ENCODE measurements at regions of chr4 and their contacts with region 1.

Region 1: GRCh38 chr4:57163530-57164459 is 53.6 kb upstream of the IGFBP7 start:
- DNase-seq: peak; percentile 86
- H3K4me3 Mint-ChIP-seq: peak overlapping the region; percentile 91
- H3K27ac Mint-ChIP-seq: peak overlapping the region; percentile 82
- H3K4me1 Mint-ChIP-seq: peaks cover 15% of the 10 kb centered on the region
- H3K27me3 Mint-ChIP-seq: no peaks in the 10 kb centered on the region
- CTCF ChIP-seq: peak; percentile 88

Region 2: GRCh38 chr4:56496241-56496640 is 667.6 kb before region 1 on chr4:
- CTCF ChIA-PET with region 1: no interaction called
- POLR2A ChIA-PET with region 1: no interaction called
- intact Hi-C with region 1: no loop called
- DNase-seq: no peak
- H3K4me3 Mint-ChIP-seq: no peak overlapping the region
- H3K27ac Mint-ChIP-seq: no peak overlapping the region
- H3K4me1 Mint-ChIP-seq: no peaks in the 10 kb centered on the region
- H3K27me3 Mint-ChIP-seq: no peaks in the 10 kb centered on the region
- CTCF ChIP-seq: no peak

Region 3: DNA sequence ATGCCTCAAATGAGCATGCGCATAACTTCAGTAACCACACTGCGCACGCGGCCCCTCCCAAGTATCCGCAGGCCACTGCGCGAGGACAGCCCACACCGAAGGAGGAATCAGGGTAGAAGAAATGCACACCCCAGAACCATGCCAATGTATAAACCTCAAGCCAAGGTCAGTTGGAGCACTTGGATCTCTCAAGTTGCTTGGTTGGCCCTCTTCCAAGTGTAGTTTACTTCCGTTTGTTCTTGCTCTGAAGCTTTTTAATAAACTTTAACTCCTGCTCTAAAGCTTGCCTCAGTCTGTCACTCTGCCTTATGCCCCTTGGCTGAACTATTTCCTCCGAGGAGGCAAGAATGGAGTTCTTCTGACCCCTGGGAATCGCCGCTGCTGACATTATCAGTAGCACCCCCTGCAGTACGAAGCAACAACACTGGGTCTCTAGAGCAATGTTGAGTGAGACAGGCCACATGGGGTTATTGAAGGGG is 320.3 kb before region 1 on chr4:
- CTCF ChIA-PET with region 1: no interaction called
- POLR2A ChIA-PET with region 1: no interaction called
- intact Hi-C with region 1: no loop called
- DNase-seq: no peak
- H3K4me3 Mint-ChIP-seq: no peak overlapping the region
- H3K27ac Mint-ChIP-seq: no peak overlapping the region
- H3K4me1 Mint-ChIP-seq: no peaks in the 10 kb centered on the region
- H3K27me3 Mint-ChIP-seq: no peaks in the 10 kb centered on the region
- CTCF ChIP-seq: no peak

Region 4: GRCh38 chr4:57037982-57038604 is 125.7 kb before region 1 on chr4:
- CTCF ChIA-PET with region 1: interaction called, 213 read pairs
- POLR2A ChIA-PET with region 1: interaction called, 8 read pairs
- intact Hi-C with region 1: loop called (anchors 1 kb)
- DNase-seq: peak; percentile 76
- H3K4me3 Mint-ChIP-seq: no peak overlapping the region
- H3K27ac Mint-ChIP-seq: no peak overlapping the region
- H3K4me1 Mint-ChIP-seq: peaks cover 24% of the 10 kb centered on the region
- H3K27me3 Mint-ChIP-seq: no peaks in the 10 kb centered on the region
- CTCF ChIP-seq: peak; percentile 89

Region 5: DNA sequence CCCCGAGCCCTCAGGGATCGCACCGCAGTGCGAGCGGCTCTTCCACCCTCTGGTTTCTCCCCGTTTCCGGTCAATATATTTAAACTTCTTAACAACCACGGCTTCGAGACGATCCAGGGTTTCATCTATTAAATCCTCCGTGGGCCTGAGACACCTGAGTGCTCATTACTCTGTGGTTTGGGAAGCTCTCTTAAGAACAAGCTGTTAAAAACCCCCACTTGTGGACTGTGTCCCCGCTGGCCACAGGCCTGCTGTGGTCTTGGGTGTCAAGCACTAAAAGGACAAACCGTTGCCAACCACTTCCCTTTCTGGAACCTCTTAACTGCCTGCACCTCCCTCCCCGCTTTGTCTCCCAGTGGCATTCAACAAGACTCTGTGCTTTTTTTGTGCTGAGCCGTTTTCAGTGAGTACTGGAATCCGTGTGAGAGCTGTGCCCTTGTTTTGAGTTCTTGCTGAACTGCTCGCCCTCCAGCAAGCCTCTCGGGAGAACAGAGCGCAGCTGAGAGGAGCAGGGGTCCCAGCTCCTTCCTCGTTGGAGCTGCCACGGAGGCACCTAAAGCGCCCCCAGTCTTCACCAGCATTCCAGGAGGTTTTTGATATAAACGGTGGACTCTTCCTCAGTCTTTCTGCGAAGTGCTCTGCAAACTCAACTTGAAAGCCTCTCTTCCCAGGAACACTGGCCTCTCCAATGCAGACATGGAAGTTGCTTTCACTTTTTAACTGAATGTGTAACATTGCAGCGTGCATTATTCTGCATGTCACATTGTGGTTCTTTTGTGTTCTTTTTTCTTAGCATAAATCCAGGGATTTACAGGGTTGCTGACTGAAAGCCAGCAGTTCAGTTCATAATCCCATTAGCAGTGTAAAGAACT is 52.9 kb before region 1 on chr4:
- CTCF ChIA-PET with region 1: interaction called, 10 read pairs
- POLR2A ChIA-PET with region 1: no interaction called
- intact Hi-C with region 1: no loop called
- DNase-seq: no peak
- H3K4me3 Mint-ChIP-seq: peak overlapping the region; percentile 68
- H3K27ac Mint-ChIP-seq: no peak overlapping the region
- H3K4me1 Mint-ChIP-seq: peaks cover 30% of the 10 kb centered on the region
- H3K27me3 Mint-ChIP-seq: no peaks in the 10 kb centered on the region
- CTCF ChIP-seq: no peak

Region 6: GRCh38 chr4:57190601-57191481 is 27.0 kb after region 1 on chr4:
- CTCF ChIA-PET with region 1: interaction called, 21 read pairs
- POLR2A ChIA-PET with region 1: no interaction called
- intact Hi-C with region 1: no loop called
- DNase-seq: peak; percentile 50
- H3K4me3 Mint-ChIP-seq: no peak overlapping the region
- H3K27ac Mint-ChIP-seq: no peak overlapping the region
- H3K4me1 Mint-ChIP-seq: peaks cover 9% of the 10 kb centered on the region
- H3K27me3 Mint-ChIP-seq: no peaks in the 10 kb centered on the region
- CTCF ChIP-seq: peak; percentile 55

Region 7: DNA sequence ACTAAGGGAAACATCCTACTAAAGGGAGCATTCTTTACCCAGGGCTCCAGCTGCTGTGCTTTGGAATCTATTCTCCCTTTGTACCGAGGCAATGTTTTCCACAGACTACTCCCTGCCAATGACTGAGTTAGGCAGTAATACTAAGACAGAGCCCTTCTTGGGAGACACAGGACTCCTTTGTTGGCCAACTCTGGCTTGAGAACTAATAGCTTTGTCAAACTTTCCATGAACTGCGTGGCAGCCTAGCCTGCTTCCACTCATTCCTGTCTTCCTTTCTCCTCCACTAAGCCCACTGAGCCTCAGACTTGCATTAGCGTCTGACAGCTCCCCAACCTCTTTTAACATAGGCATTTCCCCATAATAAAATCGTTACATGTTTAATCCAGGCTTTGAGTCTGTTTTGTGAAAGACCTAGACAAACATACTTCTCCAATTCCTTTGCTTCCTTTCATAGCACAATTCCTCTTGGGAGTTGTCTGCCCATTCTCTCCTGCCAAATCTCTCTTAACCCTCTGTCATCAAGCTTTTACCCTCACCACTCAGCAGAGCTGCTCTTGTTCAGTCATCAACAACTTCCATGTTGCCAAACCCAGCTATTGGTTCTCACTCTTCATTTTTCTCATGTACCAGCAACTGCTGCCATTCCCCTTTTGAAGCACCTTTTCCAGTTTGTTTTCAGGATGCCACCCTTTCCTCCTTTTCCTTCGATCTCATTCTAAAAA is 246.7 kb after region 1 on chr4:
- CTCF ChIA-PET with region 1: interaction called, 40 read pairs
- POLR2A ChIA-PET with region 1: interaction called, 4 read pairs
- intact Hi-C with region 1: no loop called
- DNase-seq: no peak
- H3K4me3 Mint-ChIP-seq: no peak overlapping the region
- H3K27ac Mint-ChIP-seq: no peak overlapping the region
- H3K4me1 Mint-ChIP-seq: peaks cover 2% of the 10 kb centered on the region
- H3K27me3 Mint-ChIP-seq: no peaks in the 10 kb centered on the region
- CTCF ChIP-seq: no peak

Region 8: GRCh38 chr4:57442831-57443291 is 279.1 kb after region 1 on chr4:
- CTCF ChIA-PET with region 1: interaction called, 69 read pairs
- POLR2A ChIA-PET with region 1: interaction called, 3 read pairs
- intact Hi-C with region 1: loop called (anchors 5 kb)
- DNase-seq: peak; percentile 70
- H3K4me3 Mint-ChIP-seq: no peak overlapping the region
- H3K27ac Mint-ChIP-seq: no peak overlapping the region
- H3K4me1 Mint-ChIP-seq: no peaks in the 10 kb centered on the region
- H3K27me3 Mint-ChIP-seq: no peaks in the 10 kb centered on the region
- CTCF ChIP-seq: peak; percentile 91

Region 9: GRCh38 chr4:58247792-58248191 is 1084.0 kb after region 1 on chr4:
- CTCF ChIA-PET with region 1: no interaction called
- POLR2A ChIA-PET with region 1: no interaction called
- intact Hi-C with region 1: loop called (anchors 10 kb)
- DNase-seq: peak; percentile 44
- H3K4me3 Mint-ChIP-seq: no peak overlapping the region
- H3K27ac Mint-ChIP-seq: no peak overlapping the region
- H3K4me1 Mint-ChIP-seq: no peaks in the 10 kb centered on the region
- H3K27me3 Mint-ChIP-seq: no peaks in the 10 kb centered on the region
- CTCF ChIP-seq: peak; percentile 20

Measured in MCF 10A (cell line).